GM13976 (cell line): ENCODE measurements at regions of chr17 and their contacts with region 1.

Region 1: DNA sequence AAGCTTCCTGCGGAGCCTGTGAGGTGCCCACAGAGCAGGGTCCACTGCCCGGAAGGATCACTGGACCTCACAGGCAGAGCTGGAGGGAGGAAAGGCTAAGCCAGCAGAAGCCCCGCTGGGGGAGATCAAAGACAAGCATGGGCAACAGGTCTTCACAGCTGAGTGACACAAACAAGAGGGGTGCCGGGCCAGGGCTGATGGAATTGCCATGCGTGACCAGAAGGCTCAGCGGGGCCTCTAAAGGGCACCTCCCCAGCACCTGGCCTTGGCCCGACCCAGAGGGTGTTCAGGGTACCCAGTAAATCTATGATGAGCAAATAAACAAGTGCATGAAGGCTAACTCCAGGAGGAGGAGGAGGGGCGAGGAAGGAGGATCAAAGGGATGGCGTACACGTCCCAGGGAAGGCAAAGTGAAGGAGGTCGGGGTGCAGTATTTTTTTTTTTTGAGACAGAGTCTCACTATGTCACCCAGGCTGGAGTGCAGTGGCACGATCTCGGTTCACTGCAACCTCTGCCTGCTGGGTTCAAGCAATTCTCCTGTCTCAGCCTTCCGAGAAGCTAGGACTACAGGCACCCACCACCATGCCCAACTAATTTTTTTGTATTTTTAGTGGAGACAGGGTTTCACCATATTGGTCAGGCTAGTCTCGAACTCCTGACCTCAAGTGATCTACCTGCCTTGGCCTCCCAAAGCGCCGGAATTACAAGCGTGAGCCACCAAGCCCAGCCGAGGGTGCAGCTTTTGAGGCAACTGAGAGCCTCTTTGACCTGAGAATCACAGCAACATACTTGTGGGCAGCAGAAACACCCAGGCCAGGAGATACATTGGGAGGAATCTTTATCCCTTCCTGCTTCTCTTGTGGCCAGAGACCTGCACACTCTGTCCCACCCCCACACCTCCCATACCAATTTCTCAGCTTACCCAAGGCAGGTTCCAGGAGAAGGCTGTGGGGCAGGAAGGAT is 16.1 kb upstream of the EXOC7 start:
- DNase-seq: peak; percentile 9
- CTCF ChIP-seq: no peak

Region 2: DNA sequence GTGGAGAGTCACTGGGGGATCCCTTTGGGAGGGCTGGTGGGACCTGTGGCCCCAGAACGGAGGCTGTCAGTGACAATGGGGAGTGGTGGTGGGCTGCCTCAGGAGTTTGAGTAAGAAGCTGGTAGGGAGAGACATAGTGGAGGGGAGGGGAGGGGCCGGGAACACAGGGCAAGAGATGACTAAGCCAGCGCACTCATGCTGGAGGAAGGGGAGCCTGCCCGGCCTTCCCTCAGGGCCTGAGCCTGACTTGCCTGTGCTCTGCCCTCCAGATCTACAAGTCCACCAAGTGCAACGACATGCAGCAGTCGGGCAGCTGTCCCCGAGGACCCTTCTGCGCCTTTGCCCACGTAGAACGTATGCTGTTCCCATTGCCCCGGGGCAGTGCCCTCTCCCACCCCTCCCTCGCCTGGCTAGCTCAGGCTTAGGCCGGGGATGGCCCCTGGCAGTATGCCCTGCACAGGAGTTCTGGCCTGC is 304.8 kb before region 1 on chr17:
- in situ Hi-C with region 1: no loop called
- DNase-seq: no peak
- CTCF ChIP-seq: no peak

Region 3: DNA sequence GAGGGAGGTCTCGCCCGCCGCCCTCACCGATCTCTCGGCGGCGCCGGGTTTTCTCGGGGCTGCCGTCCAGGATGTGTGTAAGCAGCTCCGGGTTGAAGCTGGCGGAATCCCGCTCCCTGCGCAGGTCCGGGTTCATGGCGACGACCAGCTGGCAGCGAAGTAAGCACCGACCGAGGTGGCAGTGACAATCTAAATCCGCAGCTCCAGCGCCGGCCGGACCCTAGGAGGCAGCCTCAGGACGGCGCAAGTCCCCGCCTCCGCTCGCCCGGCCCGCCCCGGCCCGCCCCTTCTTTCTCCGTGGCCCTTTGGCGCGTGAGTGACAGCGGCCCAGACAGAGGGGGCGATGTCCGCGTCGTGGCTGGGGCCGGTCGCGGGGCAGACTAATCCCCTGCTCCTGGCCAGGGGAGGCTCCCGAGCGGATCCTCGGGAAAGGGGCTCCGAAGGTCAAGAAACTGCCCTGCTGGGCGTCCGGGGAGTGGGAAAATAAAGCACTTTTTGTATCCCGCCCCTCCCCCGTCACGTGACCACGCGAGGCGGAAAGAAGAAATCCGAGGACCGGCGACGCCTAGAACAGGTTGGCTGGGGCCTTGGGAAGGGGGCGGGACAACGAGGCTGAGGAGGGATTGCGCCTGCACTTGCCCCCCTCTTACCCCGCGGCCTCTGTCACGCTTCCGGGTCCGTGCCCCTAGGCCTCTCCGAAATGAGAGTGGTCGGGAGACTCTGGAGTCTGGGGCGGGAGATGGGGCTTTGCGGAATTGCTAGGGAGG is 140.6 kb before region 1 on chr17 and contains the starts of genes ACOX1 and TEN1:
- in situ Hi-C with region 1: no loop called
- DNase-seq: peak; percentile 95
- CTCF ChIP-seq: peak; percentile 30

Region 4: DNA sequence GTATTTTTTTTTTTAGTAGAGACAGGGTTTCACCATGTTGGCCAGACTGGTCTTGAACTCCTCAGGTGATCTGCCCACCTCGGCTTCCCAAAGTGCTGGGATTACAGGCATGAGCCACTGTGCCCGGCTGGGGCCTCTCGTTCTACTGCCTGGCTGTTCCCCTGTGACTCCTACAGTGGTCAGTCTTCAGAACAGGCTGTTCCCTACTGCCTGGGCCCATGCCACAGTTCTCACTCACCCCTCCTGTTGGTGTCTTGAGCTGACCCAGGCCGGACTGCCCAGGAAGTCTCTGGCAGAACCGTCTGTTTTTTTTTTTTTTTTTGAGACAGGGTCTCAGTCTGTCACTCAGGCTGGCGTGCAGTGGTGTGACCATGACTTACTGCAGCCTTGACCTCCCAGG is 115.8 kb before region 1 on chr17:
- in situ Hi-C with region 1: no loop called
- DNase-seq: no peak
- CTCF ChIP-seq: no peak

Region 5: DNA sequence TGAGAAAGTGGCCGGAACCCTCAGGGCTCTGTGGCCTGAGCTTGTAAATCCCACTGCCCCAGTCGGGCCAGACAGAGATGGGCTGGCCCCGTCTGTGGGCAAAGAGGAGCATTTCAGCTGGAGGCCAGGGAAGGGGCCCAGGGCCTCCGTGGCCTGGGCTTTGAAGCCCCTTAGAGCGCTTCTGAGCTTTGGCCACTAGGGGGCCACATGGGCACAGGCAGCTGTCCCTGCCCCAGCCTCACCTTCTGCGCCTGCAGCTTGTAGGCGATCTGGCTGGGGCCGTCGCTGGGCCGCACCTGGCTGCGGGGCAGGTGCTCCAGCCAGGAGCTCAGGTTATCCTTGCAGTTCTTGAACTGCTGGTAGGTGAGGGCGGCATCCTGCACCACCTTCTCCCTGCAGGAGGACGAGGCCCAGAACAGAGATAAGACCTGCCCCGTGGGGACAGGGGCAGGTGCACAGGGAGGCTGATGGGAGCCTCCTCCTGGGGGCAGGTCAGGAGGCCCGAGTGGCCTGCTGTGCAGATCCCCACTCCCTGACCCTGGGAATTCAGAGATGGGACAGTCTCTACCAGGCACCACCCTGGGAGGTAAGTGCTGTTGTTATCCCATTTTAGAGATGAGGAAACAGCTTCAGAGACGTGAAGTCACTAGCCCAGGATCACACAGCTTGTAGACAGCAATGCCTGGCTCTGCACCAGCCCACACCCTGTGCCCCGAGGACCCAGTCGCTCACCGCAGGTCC is 105.3 kb before region 1 on chr17:
- in situ Hi-C with region 1: loop called (anchors 10 kb)
- DNase-seq: peak; percentile 95
- CTCF ChIP-seq: peak; percentile 91

Region 6: GRCh38 chr17:76278952-76279741 is 159.5 kb after region 1 on chr17:
- in situ Hi-C with region 1: loop called (anchors 5 kb)
- DNase-seq: peak; percentile 92
- CTCF ChIP-seq: peak; percentile 90

Region 7: DNA sequence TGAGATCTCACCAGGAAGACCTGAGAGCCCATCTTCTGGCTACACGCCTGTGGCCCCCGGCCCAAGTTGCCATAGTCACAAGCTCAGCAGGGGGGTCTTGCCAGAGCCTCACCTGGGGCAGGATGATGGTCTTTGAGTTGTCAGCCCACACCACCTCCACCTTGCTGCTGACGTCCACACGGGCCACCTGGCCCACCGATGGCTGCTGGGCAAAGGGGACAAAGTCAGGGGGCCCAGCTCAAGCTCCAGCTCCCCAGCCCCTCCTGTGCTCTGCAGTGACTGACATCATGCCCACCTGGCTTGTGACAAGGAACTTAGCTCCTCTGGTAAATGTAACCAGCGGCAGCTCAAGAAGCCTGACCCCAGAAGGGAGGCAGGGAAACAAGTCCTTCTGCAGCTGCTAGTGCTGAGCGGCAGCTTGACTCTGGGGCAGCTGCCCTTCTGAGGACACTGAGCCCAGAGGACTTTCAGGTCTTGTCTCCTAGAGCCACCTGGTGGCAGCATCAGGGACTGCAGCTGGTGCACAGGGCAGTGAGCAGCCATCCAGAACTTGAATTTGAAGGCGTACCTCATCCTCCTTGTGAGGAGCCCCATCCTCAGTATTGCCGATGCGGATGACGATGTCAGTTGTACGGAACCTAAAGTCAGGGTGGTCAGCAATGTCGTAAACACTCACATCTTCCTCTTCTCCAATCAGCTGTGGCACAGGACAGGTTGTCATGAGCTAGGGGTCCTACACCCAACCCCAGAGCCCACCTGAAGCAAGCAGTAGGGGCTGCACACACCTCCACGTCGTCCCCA is 278.2 kb after region 1 on chr17:
- in situ Hi-C with region 1: loop called (anchors 10 kb)
- DNase-seq: peak; percentile 90
- CTCF ChIP-seq: peak; percentile 95